Right cardiac atrium (tissue), 5 donors: ENCODE measurements at regions of chr7 and their contacts with region 1.

Region 1: DNA sequence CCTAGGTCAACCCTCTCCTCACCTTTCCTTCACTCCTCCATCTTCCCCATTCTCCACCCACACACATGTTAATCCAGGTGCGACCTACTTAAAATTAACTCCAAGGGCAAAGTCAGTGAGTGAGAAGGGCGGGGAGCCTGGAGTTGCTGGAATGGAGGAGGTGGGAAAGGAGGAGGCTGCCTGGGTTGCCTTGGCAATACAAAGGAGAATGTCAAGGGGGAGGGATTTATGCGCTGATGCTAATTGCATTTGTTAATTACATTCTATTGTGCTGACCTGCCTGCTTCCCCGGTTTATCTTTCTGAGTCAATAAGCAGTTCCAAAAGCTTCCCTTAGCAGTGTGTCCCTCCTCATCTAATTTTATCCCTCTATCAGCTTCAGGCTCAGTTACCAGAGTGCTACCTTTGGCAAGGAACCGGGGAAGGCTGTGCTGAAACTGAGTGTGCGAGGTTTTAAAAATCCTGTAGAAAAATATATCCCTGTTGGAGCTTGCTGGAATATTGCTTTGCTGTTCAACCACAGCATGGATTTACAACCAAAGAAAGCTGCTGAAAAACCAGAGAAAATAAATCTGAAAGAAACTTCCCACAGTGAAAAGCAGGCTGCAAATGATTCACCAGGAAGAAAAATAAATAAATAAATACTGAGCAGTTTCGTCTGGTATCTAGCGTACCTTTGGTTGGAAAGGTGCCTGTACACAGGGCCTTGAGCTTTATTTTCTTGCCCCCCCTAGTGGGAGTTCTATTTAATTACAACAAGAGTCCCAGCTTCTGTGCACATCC is 113.2 kb upstream of the DGKB start:
- DNase-seq: peak; percentile 14 to 39 (median 35)
- ATAC-seq: peak; percentile 90 to 94
- H3K4me3 ChIP-seq: peak overlapping the region; percentile 53
- H3K27ac ChIP-seq: peak overlapping the region; percentile 90
- H3K4me1 ChIP-seq: no peaks in the 10 kb centered on the region
- H3K27me3 ChIP-seq: no peaks in the 10 kb centered on the region

Region 2: GRCh38 chr7:14377646-14378266 is 638.0 kb before region 1 on chr7:
- intact Hi-C with region 1: no loop called
- DNase-seq: no peak
- ATAC-seq: peak; percentile 61 to 69
- H3K4me3 ChIP-seq: no peak overlapping the region
- H3K27ac ChIP-seq: no peak overlapping the region
- H3K4me1 ChIP-seq: peaks cover 2% of the 10 kb centered on the region
- H3K27me3 ChIP-seq: no peaks in the 10 kb centered on the region

Region 3: GRCh38 chr7:14717816-14718215 is 297.9 kb before region 1 on chr7:
- intact Hi-C with region 1: loop called (anchors 5 kb)
- DNase-seq: no peak
- ATAC-seq: no peak
- H3K4me3 ChIP-seq: no peak overlapping the region
- H3K27ac ChIP-seq: no peak overlapping the region
- H3K4me1 ChIP-seq: no peaks in the 10 kb centered on the region
- H3K27me3 ChIP-seq: no peaks in the 10 kb centered on the region

Region 4: GRCh38 chr7:14762561-14762960 is 253.2 kb before region 1 on chr7:
- intact Hi-C with region 1: no loop called
- DNase-seq: no peak
- ATAC-seq: no peak
- H3K4me3 ChIP-seq: no peak overlapping the region
- H3K27ac ChIP-seq: no peak overlapping the region
- H3K4me1 ChIP-seq: peaks cover 2% of the 10 kb centered on the region
- H3K27me3 ChIP-seq: no peaks in the 10 kb centered on the region

Region 5: DNA sequence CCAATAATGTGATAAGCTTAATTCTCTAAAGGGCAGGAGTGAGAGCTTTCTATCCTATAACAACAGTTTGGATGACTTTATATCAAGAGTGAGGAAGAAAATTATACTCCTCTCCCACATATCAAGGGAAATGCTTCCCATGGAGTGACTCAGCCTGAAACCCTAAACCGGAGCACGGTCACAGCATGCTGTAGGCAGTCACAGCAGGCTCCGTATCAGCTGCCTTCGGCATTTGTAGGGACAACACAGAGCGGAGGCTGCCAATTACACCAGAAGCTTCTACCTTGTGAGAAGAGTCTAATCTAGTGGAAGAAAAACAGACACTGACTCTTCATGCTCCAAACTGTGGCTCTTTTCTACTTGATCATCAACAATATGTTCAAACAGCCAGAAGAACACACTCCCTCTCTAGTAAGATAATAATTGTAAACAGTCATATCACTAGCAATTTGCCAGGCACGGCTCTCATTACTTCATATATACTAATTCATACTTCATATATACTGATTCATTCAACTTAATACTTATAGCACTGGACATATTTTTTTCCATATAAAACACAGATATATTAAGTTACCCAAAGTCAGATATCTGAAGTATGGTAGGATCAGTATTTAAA is 179.1 kb before region 1 on chr7:
- intact Hi-C with region 1: loop called in 1 of 4 experiments (anchors 10 kb)
- DNase-seq: peak; percentile 39 to 69 (median 63)
- ATAC-seq: peak; percentile 88 to 90
- H3K4me3 ChIP-seq: no peak overlapping the region
- H3K27ac ChIP-seq: peak overlapping the region; percentile 81
- H3K4me1 ChIP-seq: no peaks in the 10 kb centered on the region
- H3K27me3 ChIP-seq: no peaks in the 10 kb centered on the region